Esophagus muscularis mucosa (tissue), 4 donors: ENCODE measurements at regions of chr6 and their contacts with region 1.

Region 1: DNA sequence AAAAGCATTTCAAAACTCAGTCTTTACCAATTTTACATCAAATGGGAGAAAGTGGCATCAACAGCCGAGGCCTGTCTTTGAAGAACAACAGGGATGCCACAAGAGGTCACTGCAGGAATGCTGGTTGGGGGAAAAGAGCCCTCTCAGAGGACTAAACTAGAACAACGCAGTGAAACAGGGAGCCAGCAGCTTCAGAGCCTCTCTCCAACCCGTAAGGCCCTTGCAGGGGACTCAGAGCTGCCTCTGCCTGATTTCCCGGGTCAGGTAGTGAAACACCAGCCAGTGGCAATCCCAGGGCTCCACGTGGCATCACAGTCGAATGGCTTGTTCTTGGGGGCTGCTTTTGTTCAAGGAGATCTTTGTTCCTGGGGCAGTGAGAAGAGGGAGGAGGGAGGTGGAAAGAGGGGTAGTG is 55.0 kb upstream of the KCNK16 start:
- DNase-seq: no peak
- H3K4me3 ChIP-seq: no peak overlapping the region
- H3K27ac ChIP-seq: peak overlapping the region in 3 of 4 donors; percentile 44 to 51 (median 47)
- H3K4me1 ChIP-seq: peaks cover 0 to 32% (median 26%) of the 10 kb centered on the region in 4 donors
- H3K27me3 ChIP-seq: no peaks in the 10 kb centered on the region
- CTCF ChIP-seq: peak; percentile 72 to 84 (median 73)
- EP300 ChIP-seq: no peak
- POLR2A ChIP-seq: no peak

Region 2: GRCh38 chr6:38876475-38876874 is 501.1 kb before region 1 on chr6:
- intact Hi-C with region 1: no loop called
- DNase-seq: no peak
- H3K4me3 ChIP-seq: no peak overlapping the region
- H3K27ac ChIP-seq: no peak overlapping the region
- H3K4me1 ChIP-seq: no peaks in the 10 kb centered on the region
- H3K27me3 ChIP-seq: no peaks in the 10 kb centered on the region
- CTCF ChIP-seq: no peak
- EP300 ChIP-seq: no peak
- POLR2A ChIP-seq: no peak

Region 3: GRCh38 chr6:39184906-39185580 is 192.5 kb before region 1 on chr6:
- intact Hi-C with region 1: no loop called
- DNase-seq: no peak
- H3K4me3 ChIP-seq: no peak overlapping the region
- H3K27ac ChIP-seq: no peak overlapping the region
- H3K4me1 ChIP-seq: peaks cover 0 to 11% (median 0%) of the 10 kb centered on the region in 4 donors
- H3K27me3 ChIP-seq: no peaks in the 10 kb centered on the region
- CTCF ChIP-seq: no peak
- EP300 ChIP-seq: no peak
- POLR2A ChIP-seq: no peak

Region 4: GRCh38 chr6:39426088-39426456 is 48.5 kb after region 1 on chr6:
- intact Hi-C with region 1: no loop called
- DNase-seq: peak; percentile 70
- H3K4me3 ChIP-seq: peak overlapping the region in 1 of 4 donors; percentile 8
- H3K27ac ChIP-seq: peak overlapping the region; percentile 58 to 74 (median 72)
- H3K4me1 ChIP-seq: peaks cover 15 to 64% (median 53%) of the 10 kb centered on the region in 4 donors
- H3K27me3 ChIP-seq: no peaks in the 10 kb centered on the region
- CTCF ChIP-seq: no peak
- EP300 ChIP-seq: no peak
- POLR2A ChIP-seq: no peak

Region 5: GRCh38 chr6:39791850-39792539 is 414.4 kb after region 1 on chr6 and contains the start of gene DAAM2:
- intact Hi-C with region 1: loop called (anchors 5 kb)
- DNase-seq: peak; percentile 87
- H3K4me3 ChIP-seq: peak within 1 kb of the TSS; percentile 83 to 87 (median 86)
- H3K27ac ChIP-seq: peak within 1 kb of the TSS; percentile 94 to 98 (median 96)
- H3K4me1 ChIP-seq: peaks cover 13 to 53% (median 48%) of the 10 kb centered on the region in 4 donors
- H3K27me3 ChIP-seq: no peaks in the 10 kb centered on the region
- CTCF ChIP-seq: peak in 1 of 3 experiments; percentile 21
- EP300 ChIP-seq: no peak
- POLR2A ChIP-seq: peak; percentile 24
- total RNA-seq, gene DAAM2: 221 to 446 (median 392) TPM

Region 6: GRCh38 chr6:39892490-39893129 is 515.1 kb after region 1 on chr6:
- intact Hi-C with region 1: loop called (anchors 5 kb)
- DNase-seq: no peak
- H3K4me3 ChIP-seq: no peak overlapping the region
- H3K27ac ChIP-seq: peak overlapping the region; percentile 83 to 86 (median 84)
- H3K4me1 ChIP-seq: peaks cover 13 to 52% (median 51%) of the 10 kb centered on the region in 4 donors
- H3K27me3 ChIP-seq: no peaks in the 10 kb centered on the region
- CTCF ChIP-seq: peak; percentile 61 to 70 (median 66)
- EP300 ChIP-seq: no peak
- POLR2A ChIP-seq: no peak